ENCODE measurements at regions of chr1 and their contacts with region 1.

Region 1: DNA sequence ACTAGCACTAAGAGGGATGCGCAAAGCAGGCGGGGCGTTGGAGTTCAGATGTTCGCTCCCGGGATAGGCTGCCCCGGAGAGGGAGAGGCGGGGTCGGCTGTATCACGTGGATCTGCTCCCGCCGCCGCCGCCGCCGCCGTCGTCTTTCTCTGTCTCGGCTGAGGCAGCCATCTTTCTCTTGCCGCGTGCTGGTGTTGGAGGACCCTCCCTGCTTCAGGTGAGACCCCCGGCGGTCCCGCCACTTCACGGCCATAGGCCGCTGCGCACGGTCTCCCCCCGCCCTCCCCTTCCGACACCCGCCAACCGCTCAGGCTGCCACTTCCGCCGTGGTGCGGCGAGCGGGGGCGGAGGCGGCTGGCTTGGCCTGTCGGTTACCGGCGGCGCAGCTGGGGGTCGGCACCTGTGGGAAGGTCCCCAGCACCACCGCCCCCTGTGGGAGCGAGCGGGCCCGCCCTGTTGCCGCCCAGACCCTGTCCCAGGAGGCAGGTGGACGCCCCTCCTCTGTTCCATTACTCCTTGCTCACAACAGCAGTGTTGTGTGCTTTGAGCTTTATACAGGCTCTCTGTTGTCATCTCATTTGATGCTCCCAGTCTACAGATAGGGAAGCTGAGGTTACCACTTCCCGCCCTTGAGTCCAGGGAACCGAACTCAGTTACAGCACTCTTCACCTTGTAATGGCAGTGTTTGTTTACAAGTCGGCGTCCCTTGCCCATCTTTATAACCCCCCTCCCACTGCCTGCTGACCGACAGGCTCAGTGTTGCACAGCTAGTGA is at the start of gene BTF3L4:
- DNase-seq: peak; percentile 91
- ATAC-seq: peak; percentile 94
- H3K4me3 ChIP-seq: peak within 1 kb of the TSS; percentile 85 to 89 (median 87)
- H3K27ac ChIP-seq: peak within 1 kb of the TSS; percentile 91
- H3K4me1 ChIP-seq: peaks cover 51% of the 10 kb centered on the region
- H3K27me3 ChIP-seq: no peaks in the 10 kb centered on the region; a peak in 1 of 5 replicates
- CTCF ChIP-seq: no peak
- EP300 ChIP-seq: no peak
- POLR2A ChIP-seq: peak; percentile 66 to 70
- RAD21 ChIP-seq: no peak; the same call in 1 of the 2 replicates
- total RNA-seq, gene BTF3L4: 74.3 and 112 TPM in 2 replicates

Region 2: DNA sequence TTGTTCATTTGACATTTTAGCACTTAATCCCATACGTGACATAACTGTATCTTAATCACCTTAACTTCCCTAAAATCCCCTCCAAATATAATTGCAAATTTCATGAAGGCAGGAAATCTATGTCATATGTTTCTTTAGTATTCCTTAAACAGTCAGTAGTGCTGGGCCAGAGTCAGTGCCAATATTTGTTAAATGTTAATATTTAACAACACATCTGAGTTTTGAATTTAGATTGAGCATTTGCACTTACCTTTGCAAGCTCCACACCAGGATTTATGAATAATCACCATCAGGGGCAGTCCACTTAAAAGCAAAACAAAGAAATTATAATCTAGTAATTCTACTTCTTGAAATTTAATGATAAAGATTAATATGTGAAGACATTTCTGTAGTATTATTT is 28.0 kb before region 1 on chr1:
- CTCF ChIA-PET with region 1: no interaction called
- POLR2A ChIA-PET with region 1: interaction called, 25 read pairs
- in situ Hi-C with region 1: no loop called
- intact Hi-C with region 1: loop called (anchors 2 kb)
- DNase-seq: peak; percentile 24
- ATAC-seq: peak; percentile 38
- H3K4me3 ChIP-seq: no peak overlapping the region
- H3K27ac ChIP-seq: no peak overlapping the region
- H3K4me1 ChIP-seq: peaks cover 49% of the 10 kb centered on the region
- H3K27me3 ChIP-seq: no peaks in the 10 kb centered on the region; a peak in 1 of 5 replicates
- CTCF ChIP-seq: no peak
- EP300 ChIP-seq: no peak
- POLR2A ChIP-seq: no peak
- RAD21 ChIP-seq: no peak

Region 3: DNA sequence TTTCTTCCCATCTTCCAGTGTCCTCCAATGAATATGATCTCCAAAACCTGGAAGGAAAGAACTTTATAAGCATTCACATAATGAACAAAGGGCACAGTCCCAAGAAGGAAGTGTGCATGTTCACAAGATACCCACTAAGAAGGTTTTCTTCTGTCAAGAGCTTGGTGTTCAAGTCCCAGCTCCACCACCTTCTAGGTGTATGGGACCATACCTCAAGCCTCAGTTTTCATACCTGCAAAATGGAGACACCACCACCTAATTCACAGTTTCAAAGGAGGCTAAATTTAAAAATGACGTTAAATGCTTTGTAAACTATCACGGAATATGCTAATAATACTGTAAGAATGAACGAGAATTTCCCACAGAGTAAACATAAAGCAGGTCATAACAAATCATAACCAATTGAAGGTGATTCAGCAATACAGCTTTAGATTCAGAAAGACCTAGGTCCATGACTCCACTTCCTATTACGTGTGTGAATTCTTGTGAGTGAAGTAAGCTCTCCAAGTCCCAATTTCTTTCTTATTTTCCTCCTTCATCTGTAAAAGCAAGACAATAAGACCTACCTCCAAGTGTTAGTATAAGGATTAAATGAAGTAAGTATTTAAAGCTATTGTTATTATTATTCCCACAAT is 14.7 kb before region 1 on chr1:
- CTCF ChIA-PET with region 1: no interaction called
- POLR2A ChIA-PET with region 1: interaction called, 22 read pairs
- in situ Hi-C with region 1: no loop called
- intact Hi-C with region 1: no loop called
- DNase-seq: no peak
- ATAC-seq: no peak
- H3K4me3 ChIP-seq: no peak overlapping the region
- H3K27ac ChIP-seq: no peak overlapping the region
- H3K4me1 ChIP-seq: peaks cover 27% of the 10 kb centered on the region
- H3K27me3 ChIP-seq: no peaks in the 10 kb centered on the region
- CTCF ChIP-seq: no peak
- EP300 ChIP-seq: no peak
- POLR2A ChIP-seq: no peak
- RAD21 ChIP-seq: no peak

Region 4: GRCh38 chr1:52080014-52080415 is 23.7 kb after region 1 on chr1:
- CTCF ChIA-PET with region 1: no interaction called
- POLR2A ChIA-PET with region 1: interaction called, 80 read pairs
- in situ Hi-C with region 1: no loop called
- intact Hi-C with region 1: no loop called
- DNase-seq: peak; percentile 97
- ATAC-seq: peak; percentile 81
- H3K4me3 ChIP-seq: no peak overlapping the region
- H3K27ac ChIP-seq: peak overlapping the region; percentile 80
- H3K4me1 ChIP-seq: peaks cover 55% of the 10 kb centered on the region
- H3K27me3 ChIP-seq: no peaks in the 10 kb centered on the region
- CTCF ChIP-seq: no peak
- EP300 ChIP-seq: peak in 1 of 2 experiments; percentile 90; a peak in 2 of 4 replicates
- POLR2A ChIP-seq: no peak
- RAD21 ChIP-seq: no peak